ENCODE measurements at regions of chr6 and their contacts with region 1.

Region 1: GRCh38 chr6:46437671-46438221 is 53.5 kb downstream of the RCAN2 start:
- DNase-seq: no peak
- ATAC-seq: peak; percentile 87

Region 2: DNA sequence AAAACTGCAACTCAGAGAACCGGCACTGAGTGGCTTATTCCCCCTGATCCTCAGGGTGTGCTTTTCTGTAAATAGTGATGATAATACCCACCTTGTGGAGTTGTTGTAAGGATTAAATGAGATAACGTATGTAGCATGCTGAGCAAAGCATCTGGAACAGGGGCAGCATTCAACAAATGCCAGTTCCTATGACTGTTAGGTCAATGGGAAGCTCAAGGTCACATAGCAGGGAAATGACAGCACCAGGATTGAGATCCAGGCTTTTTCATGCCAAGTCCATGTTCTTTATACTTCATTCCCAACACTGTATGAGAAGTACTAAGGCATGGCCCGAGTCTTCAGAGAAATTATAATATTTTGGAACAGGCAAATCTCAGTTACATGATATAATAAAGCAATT is 48.4 kb after region 1 on chr6:
- intact Hi-C with region 1: loop called (anchors 5 kb)
- DNase-seq: no peak
- ATAC-seq: peak; percentile 44

Region 3: DNA sequence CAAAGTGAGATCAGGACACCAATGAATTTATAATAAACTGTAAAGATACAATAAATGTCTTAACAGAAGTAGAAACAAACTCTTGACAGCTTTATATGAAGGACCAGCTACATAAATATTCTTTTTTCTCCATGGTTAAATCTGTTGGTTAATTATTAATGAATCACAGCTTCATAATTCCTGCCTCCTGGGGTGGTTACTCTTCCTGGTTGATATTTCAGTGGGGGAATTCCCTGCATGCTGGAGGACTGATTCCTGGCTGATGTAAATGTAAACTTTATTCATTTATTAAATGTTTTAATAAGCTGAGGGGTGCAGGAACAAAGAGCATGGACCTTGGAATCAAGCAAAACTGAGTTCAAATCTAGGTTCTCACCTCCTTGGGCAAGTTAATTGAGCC is 69.7 kb after region 1 on chr6:
- intact Hi-C with region 1: loop called (anchors 5 kb)
- DNase-seq: no peak
- ATAC-seq: no peak

Region 4: GRCh38 chr6:46612645-46613044 is 174.9 kb after region 1 on chr6:
- intact Hi-C with region 1: loop called (anchors 5 kb)
- DNase-seq: no peak
- ATAC-seq: peak; percentile 57